Common myeloid progenitor, CD34-positive (primary cell): ENCODE measurements at regions of chr17 and their contacts with region 1.

Region 1: GRCh38 chr17:68777243-68777855 is 176.2 kb upstream of the FAM20A start:
- DNase-seq: peak; percentile 49 to 67 (median 59)
- H3K4me3 ChIP-seq: no peak overlapping the region
- H3K27ac ChIP-seq: no peak overlapping the region
- H3K4me1 ChIP-seq: peaks cover 0 to 3% (median 0%) of the 10 kb centered on the region in 4 experiments
- H3K27me3 ChIP-seq: no peaks in the 10 kb centered on the region

Region 2: DNA sequence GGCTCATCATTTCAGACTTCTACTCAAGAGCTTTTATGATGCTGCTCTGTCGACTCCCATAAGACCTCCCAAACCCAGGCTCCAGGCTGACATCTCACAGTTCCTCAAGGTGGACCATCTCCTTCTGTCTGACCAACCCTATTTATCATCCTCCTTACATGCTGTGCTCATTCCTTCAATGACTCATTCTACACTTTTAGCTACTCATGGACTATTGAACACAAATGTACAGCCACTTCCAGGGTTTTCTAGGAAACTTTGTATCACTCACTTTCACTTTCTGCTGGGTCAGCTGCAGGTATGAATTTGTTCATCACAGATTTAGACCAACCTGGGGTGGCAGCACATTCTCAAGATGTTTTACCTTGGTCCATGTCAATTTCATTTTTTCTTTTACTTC is 13.8 kb before region 1 on chr17:
- CTCF ChIA-PET with region 1: interaction called, 10 read pairs
- POLR2A ChIA-PET with region 1: no interaction called
- DNase-seq: peak in 1 of 3 donors; percentile 10
- H3K4me3 ChIP-seq: no peak overlapping the region
- H3K27ac ChIP-seq: no peak overlapping the region
- H3K4me1 ChIP-seq: peaks cover 4 to 11% (median 7%) of the 10 kb centered on the region in 4 experiments
- H3K27me3 ChIP-seq: no peaks in the 10 kb centered on the region

Region 3: GRCh38 chr17:68878226-68878885 is 101.0 kb after region 1 on chr17:
- CTCF ChIA-PET with region 1: no interaction called
- POLR2A ChIA-PET with region 1: no interaction called
- DNase-seq: peak in 1 of 3 donors; percentile 1
- H3K4me3 ChIP-seq: no peak overlapping the region
- H3K27ac ChIP-seq: no peak overlapping the region
- H3K4me1 ChIP-seq: no peaks in the 10 kb centered on the region
- H3K27me3 ChIP-seq: no peaks in the 10 kb centered on the region

Region 4: GRCh38 chr17:69235338-69235930 is 458.1 kb after region 1 on chr17:
- CTCF ChIA-PET with region 1: interaction called, 134 read pairs
- POLR2A ChIA-PET with region 1: no interaction called
- DNase-seq: peak; percentile 85 to 95 (median 93)
- H3K4me3 ChIP-seq: no peak overlapping the region
- H3K27ac ChIP-seq: no peak overlapping the region
- H3K4me1 ChIP-seq: peaks cover 0 to 4% (median 2%) of the 10 kb centered on the region in 4 experiments
- H3K27me3 ChIP-seq: no peaks in the 10 kb centered on the region

Region 5: GRCh38 chr17:69246726-69247375 is 469.5 kb after region 1 on chr17:
- CTCF ChIA-PET with region 1: interaction called, 134 read pairs
- POLR2A ChIA-PET with region 1: no interaction called
- DNase-seq: peak; percentile 47 to 77 (median 73)
- H3K4me3 ChIP-seq: no peak overlapping the region
- H3K27ac ChIP-seq: no peak overlapping the region
- H3K4me1 ChIP-seq: no peaks in the 10 kb centered on the region
- H3K27me3 ChIP-seq: no peaks in the 10 kb centered on the region